Caco-2 (cell line): ENCODE measurements at regions of chr16 and their contacts with region 1.

Region 1: GRCh38 chr16:48526058-48526957 is 83.7 kb downstream of the N4BP1 start:
- DNase-seq: peak; percentile 88 to 92
- H3K4me3 ChIP-seq: peak overlapping the region; percentile 22
- H3K4me3 Mint-ChIP-seq: peak overlapping the region; percentile 73
- H3K27ac Mint-ChIP-seq: peak overlapping the region; percentile 88
- H3K4me1 ChIP-seq: peaks cover 25% of the 10 kb centered on the region
- H3K4me1 Mint-ChIP-seq: peaks cover 27% of the 10 kb centered on the region
- H3K27me3 ChIP-seq: no peaks in the 10 kb centered on the region
- H3K27me3 Mint-ChIP-seq: no peaks in the 10 kb centered on the region
- CTCF ChIP-seq: peak; percentile 80 to 92

Region 2: DNA sequence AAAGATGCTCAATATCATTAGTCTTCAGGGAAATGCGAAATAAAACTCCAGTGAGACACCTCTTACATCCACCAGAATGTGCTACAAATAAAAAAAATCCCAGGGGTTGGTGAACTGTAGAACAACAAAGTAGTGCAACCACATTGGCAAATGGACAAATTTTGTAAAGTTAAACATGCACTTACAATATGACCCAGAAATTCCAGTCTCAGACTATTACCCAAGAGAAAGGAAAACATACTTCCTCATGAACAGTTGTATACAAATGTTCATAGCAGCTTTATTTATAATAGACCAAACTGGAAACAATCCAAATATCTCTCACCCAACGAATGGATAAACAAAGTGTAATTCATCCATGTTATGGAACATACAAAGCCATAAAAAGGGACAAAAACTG is 610.0 kb before region 1 on chr16:
- CTCF ChIA-PET with region 1: no interaction called
- POLR2A ChIA-PET with region 1: no interaction called
- intact Hi-C with region 1: no loop called
- DNase-seq: no peak
- H3K4me3 ChIP-seq: no peak overlapping the region
- H3K4me3 Mint-ChIP-seq: no peak overlapping the region
- H3K27ac Mint-ChIP-seq: no peak overlapping the region
- H3K4me1 ChIP-seq: peaks cover 11% of the 10 kb centered on the region; the same call in 1 of the 2 replicates
- H3K4me1 Mint-ChIP-seq: peaks cover 10% of the 10 kb centered on the region
- H3K27me3 ChIP-seq: no peaks in the 10 kb centered on the region
- H3K27me3 Mint-ChIP-seq: no peaks in the 10 kb centered on the region
- CTCF ChIP-seq: no peak

Region 3: GRCh38 chr16:48164907-48165726 is 361.2 kb before region 1 on chr16:
- CTCF ChIA-PET with region 1: no interaction called
- POLR2A ChIA-PET with region 1: no interaction called
- intact Hi-C with region 1: loop called (anchors 5 kb)
- DNase-seq: peak; percentile 78 to 86
- H3K4me3 ChIP-seq: peak overlapping the region; percentile 5; the same call in 1 of the 2 replicates
- H3K4me3 Mint-ChIP-seq: peak overlapping the region; percentile 68
- H3K27ac Mint-ChIP-seq: peak overlapping the region; percentile 81
- H3K4me1 ChIP-seq: peaks cover 12% of the 10 kb centered on the region
- H3K4me1 Mint-ChIP-seq: peaks cover 16% of the 10 kb centered on the region
- H3K27me3 ChIP-seq: no peaks in the 10 kb centered on the region
- H3K27me3 Mint-ChIP-seq: no peaks in the 10 kb centered on the region
- CTCF ChIP-seq: peak; percentile 82 to 91

Region 4: GRCh38 chr16:48353565-48354163 is 172.6 kb before region 1 on chr16:
- CTCF ChIA-PET with region 1: interaction called, 11 read pairs
- POLR2A ChIA-PET with region 1: no interaction called
- intact Hi-C with region 1: loop called (anchors 1 kb)
- DNase-seq: peak; percentile 63 to 75
- H3K4me3 ChIP-seq: no peak overlapping the region
- H3K4me3 Mint-ChIP-seq: no peak overlapping the region
- H3K27ac Mint-ChIP-seq: no peak overlapping the region
- H3K4me1 ChIP-seq: no peaks in the 10 kb centered on the region
- H3K4me1 Mint-ChIP-seq: no peaks in the 10 kb centered on the region
- H3K27me3 ChIP-seq: no peaks in the 10 kb centered on the region
- H3K27me3 Mint-ChIP-seq: no peaks in the 10 kb centered on the region
- CTCF ChIP-seq: peak; percentile 83 to 95

Region 5: DNA sequence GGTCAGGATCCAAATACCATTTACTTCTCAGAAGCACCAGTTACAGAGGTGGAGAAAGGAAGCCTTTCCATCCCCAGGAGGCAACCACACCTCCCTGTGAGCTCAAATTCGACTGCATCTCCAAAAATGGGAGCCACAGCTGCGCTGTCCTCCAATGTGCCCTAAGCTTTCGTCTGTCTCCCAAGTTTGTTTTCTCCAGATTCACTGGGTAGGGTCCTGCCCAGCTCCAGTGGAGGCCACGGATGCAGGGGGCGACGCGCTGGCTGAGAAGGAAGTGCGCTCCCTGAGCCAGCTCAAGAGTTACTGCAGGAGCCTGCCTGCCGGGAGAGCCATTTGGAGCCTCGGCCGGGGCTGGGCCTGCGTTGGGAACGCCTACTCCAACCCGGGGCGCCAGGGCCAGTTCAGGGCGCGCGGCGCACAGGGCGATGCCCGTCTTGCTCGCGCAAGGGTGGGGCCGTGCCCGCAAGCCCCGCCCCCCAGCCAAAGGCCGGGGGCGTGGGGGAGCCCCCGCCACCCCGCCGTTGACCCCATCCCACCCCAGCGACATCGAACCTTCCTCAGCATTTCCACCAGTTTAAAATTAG is 160.6 kb before region 1 on chr16:
- CTCF ChIA-PET with region 1: interaction called, 13 read pairs
- POLR2A ChIA-PET with region 1: interaction called, 3 read pairs
- intact Hi-C with region 1: no loop called
- DNase-seq: peak; percentile 87 to 92
- H3K4me3 ChIP-seq: peak overlapping the region; percentile 54
- H3K4me3 Mint-ChIP-seq: peak overlapping the region; percentile 86
- H3K27ac Mint-ChIP-seq: peak overlapping the region; percentile 94
- H3K4me1 ChIP-seq: peaks cover 20% of the 10 kb centered on the region
- H3K4me1 Mint-ChIP-seq: no peaks in the 10 kb centered on the region
- H3K27me3 ChIP-seq: no peaks in the 10 kb centered on the region
- H3K27me3 Mint-ChIP-seq: no peaks in the 10 kb centered on the region
- CTCF ChIP-seq: no peak

Region 6: DNA sequence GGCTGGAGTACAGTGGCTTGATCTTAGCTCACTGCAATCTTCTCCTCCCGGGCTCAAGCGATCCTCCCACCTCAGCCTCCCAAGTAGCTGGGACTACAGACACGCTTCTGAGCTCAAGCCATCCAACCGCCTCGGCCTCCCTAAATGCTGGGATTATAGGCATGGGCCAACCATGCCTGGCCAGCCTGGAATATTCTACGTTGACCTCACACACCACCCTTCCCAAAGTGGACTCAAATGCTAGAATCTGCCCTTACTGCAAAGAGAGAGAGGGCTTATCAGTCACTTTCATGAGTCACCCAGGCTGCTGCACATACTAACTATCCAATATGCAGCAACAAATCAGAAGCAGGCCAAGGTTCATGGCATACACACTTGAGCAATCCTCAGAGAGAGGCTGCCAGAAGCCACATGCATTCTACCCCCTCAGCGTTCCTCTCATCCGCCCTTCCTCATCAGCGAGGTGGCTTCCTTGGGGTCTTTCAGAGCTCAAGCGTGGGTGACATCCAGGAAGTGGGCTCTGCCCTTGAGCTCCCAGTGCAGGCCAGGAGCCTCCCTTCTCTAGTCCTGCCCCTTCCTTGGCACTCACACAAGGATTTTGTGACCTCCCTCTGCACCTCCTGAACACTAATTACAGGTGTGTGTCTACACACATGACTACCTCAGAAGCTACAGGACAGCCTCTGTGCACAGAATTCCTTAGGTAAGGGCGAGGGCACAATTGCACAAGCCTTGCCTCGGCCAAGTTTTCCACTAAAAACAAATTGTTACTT is 116.3 kb before region 1 on chr16:
- CTCF ChIA-PET with region 1: no interaction called
- POLR2A ChIA-PET with region 1: no interaction called
- intact Hi-C with region 1: loop called (anchors 1 kb)
- DNase-seq: peak; percentile 81 to 87
- H3K4me3 ChIP-seq: no peak overlapping the region
- H3K4me3 Mint-ChIP-seq: peak overlapping the region; percentile 43
- H3K27ac Mint-ChIP-seq: peak overlapping the region; percentile 94
- H3K4me1 ChIP-seq: peaks cover 31% of the 10 kb centered on the region
- H3K4me1 Mint-ChIP-seq: peaks cover 20% of the 10 kb centered on the region
- H3K27me3 ChIP-seq: no peaks in the 10 kb centered on the region
- H3K27me3 Mint-ChIP-seq: no peaks in the 10 kb centered on the region
- CTCF ChIP-seq: no peak

Region 7: GRCh38 chr16:48632137-48632774 is 105.9 kb after region 1 on chr16:
- CTCF ChIA-PET with region 1: interaction called, 8 read pairs
- POLR2A ChIA-PET with region 1: no interaction called
- intact Hi-C with region 1: loop called (anchors 1 kb)
- DNase-seq: peak; percentile 51 to 53
- H3K4me3 ChIP-seq: no peak overlapping the region
- H3K4me3 Mint-ChIP-seq: no peak overlapping the region
- H3K27ac Mint-ChIP-seq: no peak overlapping the region
- H3K4me1 ChIP-seq: peaks cover 10% of the 10 kb centered on the region
- H3K4me1 Mint-ChIP-seq: peaks cover 10% of the 10 kb centered on the region
- H3K27me3 ChIP-seq: no peaks in the 10 kb centered on the region
- H3K27me3 Mint-ChIP-seq: no peaks in the 10 kb centered on the region
- CTCF ChIP-seq: no peak